Activated T-helper 2 cell treated with anti-CD3 and anti-CD28 coated beads, Interferon-gamma antibody, Interleukin-2, Interleukin-4, amounts not matched to agents 10 μg/mL and 5 μg/mL and 100 μg/mL, durations not matched to agents 14 hours and 24 hours and 36 hours (primary cell): ENCODE measurements at regions of chr9 and their contacts with region 1.

Region 1: DNA sequence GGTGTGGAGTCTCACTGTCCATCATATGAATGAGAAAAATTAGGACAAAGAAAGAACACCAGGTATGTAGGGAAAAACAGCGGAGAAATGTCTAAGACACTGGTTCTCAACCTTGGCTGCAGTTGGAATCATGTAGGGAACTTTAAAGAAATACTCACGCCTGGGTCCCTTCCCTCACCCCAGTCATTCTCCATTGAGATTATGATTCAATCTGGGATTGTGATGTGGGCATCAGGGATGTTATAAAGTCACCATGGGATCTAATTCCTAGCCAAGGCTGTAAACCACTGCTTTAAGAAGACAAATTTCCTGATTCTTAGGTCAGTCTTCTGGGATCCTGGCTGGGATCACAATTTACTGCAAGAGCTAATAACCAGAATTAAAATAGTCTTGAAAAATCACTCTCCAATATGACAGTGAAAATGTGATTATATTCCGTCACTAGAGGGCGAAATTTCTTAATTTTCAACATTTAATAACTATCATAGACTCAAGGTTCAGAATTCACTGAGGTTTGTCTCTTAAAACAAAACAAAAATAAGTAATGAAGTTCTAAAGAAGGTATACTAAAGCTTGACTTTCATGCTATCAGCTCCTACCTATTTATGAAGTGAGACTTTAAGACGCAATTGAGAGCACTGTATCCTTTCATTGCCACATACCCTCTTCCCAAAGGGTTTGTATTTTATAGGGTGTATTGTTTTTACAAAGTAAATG is 60.5 kb downstream of the GLDC start:
- DNase-seq: no peak
- H3K4me3 Mint-ChIP-seq: no peak overlapping the region
- H3K27ac Mint-ChIP-seq: no peak overlapping the region
- H3K4me1 Mint-ChIP-seq: no peaks in the 10 kb centered on the region
- H3K27me3 Mint-ChIP-seq: peaks cover under 1% of the 10 kb centered on the region

Region 2: DNA sequence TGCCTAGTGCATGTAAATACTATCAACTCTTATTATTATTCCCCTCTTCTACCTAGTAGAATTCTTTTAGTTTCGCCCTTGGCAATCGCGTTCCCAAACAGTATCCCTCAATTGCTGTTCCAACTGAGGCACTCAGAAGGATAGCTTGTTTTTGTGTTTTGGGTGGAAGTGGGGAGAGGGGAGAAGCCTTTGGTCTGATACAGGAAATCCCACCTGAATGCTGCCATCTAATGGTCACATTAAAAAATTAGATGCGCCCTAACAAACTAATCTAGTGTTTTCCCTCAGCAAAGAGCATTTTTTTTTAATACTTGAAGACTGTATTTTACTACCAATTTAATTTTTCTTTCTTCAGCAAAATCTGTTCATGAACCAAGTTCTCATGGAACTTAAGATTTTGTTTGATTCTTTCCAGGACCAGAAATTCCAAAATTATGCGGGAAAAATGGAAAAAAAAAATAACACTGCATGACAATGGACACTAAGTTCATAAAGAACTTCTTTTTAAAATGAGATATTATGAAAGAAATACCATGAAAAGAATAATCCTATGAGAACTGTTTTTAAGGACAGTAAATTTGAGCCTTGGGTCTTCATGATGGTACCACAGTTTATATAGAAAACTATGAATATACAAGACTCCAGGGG is 82.7 kb after region 1 on chr9:
- intact Hi-C with region 1: loop called (anchors 1 kb)
- DNase-seq: no peak
- H3K4me3 Mint-ChIP-seq: no peak overlapping the region
- H3K27ac Mint-ChIP-seq: no peak overlapping the region
- H3K4me1 Mint-ChIP-seq: peaks cover 1% of the 10 kb centered on the region
- H3K27me3 Mint-ChIP-seq: no peaks in the 10 kb centered on the region